Dendritic cell treated with granulocyte-macrophage colony-stimulating factor and Interleukin-4, amounts not matched to agents 40 ng/mL and 50 ng/mL, for 4 days (primary cell): ENCODE measurements at regions of chr2 and their contacts with region 1.

Region 1: DNA sequence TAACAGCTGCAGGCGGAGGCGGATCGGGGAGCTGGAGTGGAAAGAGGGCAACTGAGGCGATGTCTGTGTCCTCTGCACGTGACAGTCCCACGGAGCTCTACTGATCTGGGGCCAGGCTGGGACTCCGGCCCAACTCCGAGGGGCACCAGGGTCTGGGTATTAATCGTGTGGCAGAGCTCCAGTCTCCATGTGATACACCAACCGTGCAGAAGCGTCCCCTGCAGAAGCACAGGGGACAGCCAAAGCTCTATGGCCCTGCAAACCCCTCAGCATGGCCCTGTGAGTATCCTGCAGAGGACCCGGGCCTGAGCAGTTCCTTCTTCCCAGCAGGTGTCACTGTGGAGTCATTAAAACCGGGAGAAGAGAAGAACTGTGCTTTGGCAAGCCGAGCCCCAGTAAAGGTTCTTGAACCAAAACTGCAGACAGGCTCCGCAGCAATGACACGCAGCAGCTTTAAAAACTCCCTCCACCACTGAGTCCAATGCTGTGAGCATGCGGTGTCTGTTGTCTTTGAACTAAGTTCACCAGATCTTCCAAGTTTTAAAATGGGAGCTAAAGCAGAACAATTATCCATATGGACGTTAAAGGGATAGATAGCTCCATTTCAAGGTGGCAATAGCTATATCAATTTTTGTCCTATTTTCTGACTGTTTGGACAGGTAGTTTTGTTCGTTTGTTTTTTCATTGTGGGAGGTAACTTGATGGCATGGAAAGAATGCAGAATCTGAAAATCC is 79.4 kb downstream of the TMEM182 start:
- H3K4me3 Mint-ChIP-seq: no peak overlapping the region
- H3K27ac Mint-ChIP-seq: no peak overlapping the region
- H3K4me1 Mint-ChIP-seq: peaks cover 9% of the 10 kb centered on the region
- H3K27me3 Mint-ChIP-seq: peaks cover 3% of the 10 kb centered on the region

Region 2: DNA sequence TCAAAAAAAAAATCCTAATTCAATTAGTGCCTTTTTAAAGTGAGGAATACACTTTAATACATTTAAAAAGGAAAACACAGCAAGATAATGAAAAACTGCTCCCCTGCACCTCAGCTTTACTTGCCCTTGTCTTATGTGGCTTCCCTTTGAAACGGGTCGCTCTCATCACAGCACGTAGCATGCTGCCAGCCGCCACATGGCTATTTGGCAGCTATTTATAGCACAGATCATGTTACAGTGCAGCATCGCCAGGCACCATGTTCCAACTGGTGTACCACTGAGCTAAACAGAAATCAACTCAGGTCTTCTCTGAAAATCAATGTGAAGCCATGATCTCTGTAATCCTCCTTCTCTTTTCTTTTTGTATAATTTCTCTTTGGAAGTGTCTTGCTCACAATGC is 14.4 kb before region 1 on chr2:
- intact Hi-C with region 1: no loop called
- H3K4me3 Mint-ChIP-seq: no peak overlapping the region
- H3K27ac Mint-ChIP-seq: no peak overlapping the region
- H3K4me1 Mint-ChIP-seq: no peaks in the 10 kb centered on the region
- H3K27me3 Mint-ChIP-seq: no peaks in the 10 kb centered on the region

Region 3: GRCh38 chr2:103161456-103162289 is 320.4 kb after region 1 on chr2:
- intact Hi-C with region 1: loop called (anchors 10 kb)
- H3K4me3 Mint-ChIP-seq: no peak overlapping the region
- H3K27ac Mint-ChIP-seq: no peak overlapping the region
- H3K4me1 Mint-ChIP-seq: no peaks in the 10 kb centered on the region
- H3K27me3 Mint-ChIP-seq: no peaks in the 10 kb centered on the region

Region 4: GRCh38 chr2:103218516-103218915 is 377.2 kb after region 1 on chr2:
- intact Hi-C with region 1: no loop called
- H3K4me3 Mint-ChIP-seq: no peak overlapping the region
- H3K27ac Mint-ChIP-seq: no peak overlapping the region
- H3K4me1 Mint-ChIP-seq: no peaks in the 10 kb centered on the region
- H3K27me3 Mint-ChIP-seq: no peaks in the 10 kb centered on the region